Activated CD4-positive, alpha-beta T cell treated with anti-CD3 and anti-CD28 coated beads, Interleukin-2, amount 10 ng/mL, durations not matched to agents 24 days and 14 days (primary cell): ENCODE measurements at regions of chr17 and their contacts with region 1.

Region 1: GRCh38 chr17:75877752-75878173 is 618 bp downstream of the TRIM47 start:
- DNase-seq: peak; percentile 94
- H3K4me3 Mint-ChIP-seq: peak overlapping the region; percentile 90
- H3K27ac Mint-ChIP-seq: peak overlapping the region; percentile 96
- H3K4me1 Mint-ChIP-seq: peaks cover 35% of the 10 kb centered on the region
- H3K27me3 Mint-ChIP-seq: peaks cover 14% of the 10 kb centered on the region

Region 2: GRCh38 chr17:75855310-75856081 is 22.3 kb before region 1 on chr17 and contains the start of gene WBP2:
- intact Hi-C with region 1: loop called (anchors 1 kb)
- DNase-seq: peak; percentile 99
- H3K4me3 Mint-ChIP-seq: no peak within 1 kb of the TSS
- H3K27ac Mint-ChIP-seq: peak within 1 kb of the TSS; percentile 92
- H3K4me1 Mint-ChIP-seq: peaks cover 31% of the 10 kb centered on the region
- H3K27me3 Mint-ChIP-seq: no peaks in the 10 kb centered on the region
- total RNA-seq, gene WBP2: 68.9 and 70.0 TPM in 2 replicates

Region 3: GRCh38 chr17:75864448-75864871 is 13.3 kb before region 1 on chr17:
- intact Hi-C with region 1: loop called (anchors 1 kb)
- DNase-seq: peak; percentile 90
- H3K4me3 Mint-ChIP-seq: peak overlapping the region; percentile 60
- H3K27ac Mint-ChIP-seq: peak overlapping the region; percentile 86
- H3K4me1 Mint-ChIP-seq: peaks cover 28% of the 10 kb centered on the region
- H3K27me3 Mint-ChIP-seq: no peaks in the 10 kb centered on the region

Region 4: DNA sequence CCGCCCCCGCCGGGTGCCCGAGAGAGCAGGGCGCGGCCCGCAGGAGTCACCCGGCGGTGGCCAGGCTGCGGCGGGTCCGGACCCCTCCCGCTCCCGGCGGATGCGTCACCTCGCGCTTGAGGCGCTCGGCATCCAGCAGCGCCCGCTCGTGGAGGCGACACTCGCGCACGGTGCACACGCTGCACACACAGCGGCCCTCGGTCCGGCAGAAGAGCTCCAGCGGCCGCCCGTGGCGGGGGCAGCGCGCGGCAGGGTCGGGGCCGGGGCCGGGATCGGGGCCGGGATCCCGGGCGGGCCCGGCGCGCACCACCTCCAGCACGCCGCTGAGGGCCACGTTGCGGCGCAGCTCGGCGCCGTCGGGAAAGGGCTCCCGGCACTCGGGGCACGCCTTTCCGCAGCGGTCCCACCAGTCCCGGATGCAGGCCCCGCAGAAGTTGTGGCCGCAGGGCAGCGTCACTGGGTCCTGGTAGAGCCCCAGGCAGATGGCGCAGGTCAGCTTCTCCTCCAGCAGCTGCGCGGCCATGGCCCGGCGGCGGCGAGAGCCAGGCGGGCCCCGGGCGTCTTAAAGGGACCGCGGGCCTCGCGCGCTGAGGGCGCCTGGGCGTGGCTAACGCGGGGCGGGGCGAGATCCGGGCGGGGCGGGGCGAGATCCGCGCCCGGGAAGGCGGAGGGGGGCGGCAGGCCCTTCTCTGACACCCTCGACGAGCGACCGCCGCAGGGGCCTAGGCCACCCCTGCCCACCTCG is 18.8 kb after region 1 on chr17 and contains the start of gene TRIM65:
- intact Hi-C with region 1: loop called (anchors 2 kb)
- DNase-seq: peak; percentile 94
- H3K4me3 Mint-ChIP-seq: peak within 1 kb of the TSS; percentile 94
- H3K27ac Mint-ChIP-seq: peak within 1 kb of the TSS; percentile 89
- H3K4me1 Mint-ChIP-seq: peaks cover 22% of the 10 kb centered on the region
- H3K27me3 Mint-ChIP-seq: no peaks in the 10 kb centered on the region
- total RNA-seq, gene TRIM65: 47.6 and 48.1 TPM in 2 replicates